Left cardiac atrium (tissue), 4 donors: ENCODE measurements at regions of chr6 and their contacts with region 1.

Region 1: GRCh38 chr6:47413752-47414422 is 63.7 kb upstream of the CD2AP start:
- DNase-seq: no peak
- ATAC-seq: peak; percentile 91

Region 2: DNA sequence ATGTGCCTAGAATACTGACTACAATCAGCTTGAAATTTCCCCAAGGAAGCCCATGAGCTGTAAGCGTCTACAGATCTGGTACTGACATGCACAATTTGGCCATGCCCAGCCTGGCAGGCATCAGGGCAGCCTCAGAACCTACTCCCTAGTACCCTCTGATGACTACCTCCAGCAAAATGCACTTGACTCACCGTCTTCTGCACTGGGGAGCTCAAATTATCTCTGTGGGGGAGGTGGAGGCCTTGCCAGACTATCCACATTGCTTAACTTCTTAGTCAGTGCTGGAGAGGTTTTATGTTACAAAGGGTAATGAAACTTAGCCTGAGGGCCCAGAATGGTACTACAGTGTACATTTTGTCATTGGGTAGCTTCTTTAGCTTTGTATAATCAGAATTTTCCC is 245.7 kb before region 1 on chr6:
- intact Hi-C with region 1: no loop called
- DNase-seq: peak; percentile 71
- ATAC-seq: peak; percentile 89 to 95

Region 3: DNA sequence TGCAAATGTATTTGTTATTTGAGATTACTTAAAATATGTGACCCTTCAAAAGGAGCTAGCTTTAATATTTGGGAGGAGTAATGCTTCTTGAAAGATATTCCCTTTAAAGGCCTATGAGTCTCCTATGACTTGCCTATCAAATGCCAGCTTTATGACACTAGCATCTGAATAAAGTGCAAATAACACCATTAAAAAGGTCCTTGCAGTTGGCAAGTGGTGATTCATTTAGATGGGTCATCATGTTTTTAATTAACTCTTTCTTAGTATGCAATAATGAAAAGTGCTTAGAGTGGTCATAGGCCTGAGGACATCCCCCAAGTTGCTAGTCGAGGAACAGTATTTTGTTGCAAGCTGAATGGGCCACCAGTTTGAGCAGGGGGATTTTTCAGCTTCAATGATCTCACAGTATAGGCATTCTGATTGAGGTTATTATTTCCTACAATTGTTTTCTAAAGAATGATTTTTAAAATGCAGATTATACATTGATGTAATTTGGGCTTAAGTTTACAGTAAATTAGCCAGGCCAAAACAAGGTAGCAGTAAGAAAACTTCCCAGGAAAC is 60.0 kb after region 1 on chr6:
- intact Hi-C with region 1: loop called in 1 of 2 experiments (anchors 5 kb)
- DNase-seq: no peak
- ATAC-seq: no peak

Region 4: DNA sequence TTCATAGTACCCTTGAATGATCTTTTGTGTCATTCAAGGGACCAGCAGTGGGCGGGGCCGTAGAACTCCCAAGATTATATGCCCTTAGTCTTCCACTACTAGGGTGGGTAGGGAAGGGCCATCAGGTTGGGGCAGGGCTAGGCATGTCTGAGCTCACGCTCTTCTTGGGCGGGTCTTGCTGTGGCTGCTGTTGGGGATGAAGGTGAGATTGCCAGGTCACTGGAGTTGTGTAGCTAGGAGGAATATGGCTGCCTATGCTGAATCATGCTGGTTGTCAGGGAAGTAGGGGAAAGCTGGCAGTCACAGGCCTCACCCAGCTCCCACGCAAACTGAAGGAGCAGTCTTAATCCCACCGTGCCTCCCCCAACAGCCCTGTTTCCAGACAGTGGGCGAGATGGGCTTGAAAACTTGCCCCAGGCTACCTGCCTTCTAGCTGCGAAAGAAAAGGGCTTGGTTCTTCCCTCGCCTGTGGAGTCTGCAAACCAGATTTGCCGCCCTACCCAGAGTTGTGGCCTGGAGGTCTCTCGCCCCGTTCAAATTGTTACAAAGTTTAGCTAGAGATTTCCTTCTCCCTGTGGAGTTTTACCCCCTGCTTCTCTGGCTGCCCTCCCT is 208.1 kb after region 1 on chr6:
- intact Hi-C with region 1: loop called (anchors 10 kb)
- DNase-seq: no peak
- ATAC-seq: no peak

Region 5: DNA sequence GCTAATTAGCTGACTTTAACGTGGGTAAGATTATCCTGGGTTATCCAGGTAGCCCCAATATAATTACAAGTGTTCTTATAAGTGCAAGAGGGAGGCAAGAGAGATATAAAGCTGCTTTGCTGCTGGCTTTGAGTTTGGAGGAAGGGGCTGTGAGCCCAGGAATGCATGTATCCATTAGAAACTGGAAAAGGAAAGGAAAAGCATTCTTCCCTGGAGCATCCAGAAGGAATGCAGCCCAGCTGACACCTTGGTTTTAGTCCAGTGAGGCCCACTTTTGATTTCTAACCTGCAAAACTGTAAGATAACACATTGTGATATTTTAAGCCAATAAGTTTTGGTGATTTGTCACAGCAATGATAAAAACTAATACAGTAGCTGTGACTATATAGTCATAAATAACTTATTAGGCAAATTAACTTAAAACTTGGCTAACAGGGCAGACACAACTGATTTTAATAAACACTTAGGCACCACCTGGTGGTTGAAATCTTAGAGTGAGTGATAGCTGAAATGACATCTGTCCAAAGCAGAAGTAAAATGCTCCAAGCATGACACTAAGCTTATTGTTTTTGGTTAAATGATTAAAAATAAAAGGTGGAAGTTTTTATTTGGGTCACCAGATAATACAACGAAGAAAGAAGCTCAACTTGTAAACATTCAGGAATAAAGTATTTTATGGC is 320.1 kb after region 1 on chr6:
- intact Hi-C with region 1: loop called in 1 of 2 experiments (anchors 2 kb)
- DNase-seq: no peak
- ATAC-seq: no peak

Region 6: DNA sequence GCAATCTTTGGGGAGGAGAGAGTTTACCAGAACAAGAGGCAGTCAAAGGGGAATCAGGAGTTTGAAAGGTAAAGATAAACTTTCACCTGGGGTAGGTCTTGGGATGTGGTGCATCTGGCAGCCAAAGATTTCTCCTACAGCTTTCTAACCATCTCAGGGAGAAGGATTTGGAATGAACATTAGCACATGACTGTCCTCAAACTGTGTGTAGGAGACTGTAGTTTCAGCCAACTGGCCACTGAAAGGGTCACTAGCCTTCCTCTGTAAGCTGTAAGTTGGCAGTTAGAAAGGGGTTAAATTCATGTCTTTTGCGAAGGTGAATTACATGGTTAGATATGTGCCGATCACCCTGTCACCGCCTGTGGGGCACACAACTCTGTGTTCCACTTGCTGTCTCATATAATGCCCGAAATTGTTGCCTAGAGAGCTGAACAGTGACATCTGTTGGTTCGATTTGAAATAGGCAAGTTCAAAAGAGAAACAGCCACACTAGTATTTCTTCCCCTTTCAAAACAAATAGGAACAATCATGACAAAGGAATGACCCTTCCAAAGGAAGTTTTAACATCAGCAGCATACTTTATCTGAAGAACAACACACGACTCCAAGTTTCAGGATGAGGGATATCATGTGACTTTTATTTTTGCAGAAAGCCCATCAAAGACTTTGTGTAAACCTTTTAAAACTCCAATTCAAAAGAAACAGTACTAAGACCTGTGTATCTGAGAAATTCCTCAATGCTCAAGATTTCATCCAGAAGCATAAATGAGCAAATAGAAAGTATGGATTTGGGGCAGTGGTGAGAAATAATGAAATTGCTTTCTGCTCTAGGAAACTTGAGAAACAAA is 366.8 kb after region 1 on chr6:
- intact Hi-C with region 1: loop called in 1 of 2 experiments (anchors 1 kb)
- DNase-seq: no peak
- ATAC-seq: peak; percentile 89 to 90